Vagina (tissue), 2 donors: ENCODE measurements at regions of chr7 and their contacts with region 1.

Region 1: GRCh38 chr7:47818796-47819606 is 129.3 kb downstream of the PKD1L1 start:
- DNase-seq: no peak
- H3K4me3 ChIP-seq: no peak overlapping the region
- H3K27ac ChIP-seq: no peak overlapping the region
- H3K4me1 ChIP-seq: no peaks in the 10 kb centered on the region
- H3K27me3 ChIP-seq: no peaks in the 10 kb centered on the region
- CTCF ChIP-seq: peak; percentile 64 to 94 (median 93)
- POLR2A ChIP-seq: no peak

Region 2: GRCh38 chr7:47264021-47264651 is 554.9 kb before region 1 on chr7:
- intact Hi-C with region 1: loop called (anchors 2 kb)
- DNase-seq: no peak
- H3K4me3 ChIP-seq: no peak overlapping the region
- H3K27ac ChIP-seq: no peak overlapping the region
- H3K4me1 ChIP-seq: no peaks in the 10 kb centered on the region
- H3K27me3 ChIP-seq: no peaks in the 10 kb centered on the region
- CTCF ChIP-seq: no peak
- POLR2A ChIP-seq: no peak

Region 3: GRCh38 chr7:47444379-47445057 is 374.5 kb before region 1 on chr7:
- intact Hi-C with region 1: loop called (anchors 5 kb)
- DNase-seq: no peak
- H3K4me3 ChIP-seq: no peak overlapping the region
- H3K27ac ChIP-seq: no peak overlapping the region
- H3K4me1 ChIP-seq: no peaks in the 10 kb centered on the region
- H3K27me3 ChIP-seq: no peaks in the 10 kb centered on the region
- CTCF ChIP-seq: peak in 1 of 3 experiments; percentile 30
- POLR2A ChIP-seq: no peak